ENCODE measurements at regions of chr18 and their contacts with region 1.

Region 1: GRCh38 chr18:58110398-58110797 is 66.4 kb downstream of the NEDD4L start:
- DNase-seq: no peak
- H3K4me3 ChIP-seq: no peak overlapping the region
- H3K27ac ChIP-seq: no peak overlapping the region
- H3K4me1 ChIP-seq: no peaks in the 10 kb centered on the region
- H3K27me3 ChIP-seq: no peaks in the 10 kb centered on the region
- CTCF ChIP-seq: no peak

Region 2: GRCh38 chr18:58091099-58091611 is 19.2 kb before region 1 on chr18:
- CTCF ChIA-PET with region 1: no interaction called
- dilution Hi-C with region 1: no loop called
- in situ Hi-C with region 1: no loop called
- intact Hi-C with region 1: loop called (anchors 2 kb)
- DNase-seq: peak; percentile 77
- H3K4me3 ChIP-seq: no peak overlapping the region
- H3K27ac ChIP-seq: no peak overlapping the region
- H3K4me1 ChIP-seq: peaks cover 40% of the 10 kb centered on the region
- H3K27me3 ChIP-seq: no peaks in the 10 kb centered on the region
- CTCF ChIP-seq: no peak

Region 3: DNA sequence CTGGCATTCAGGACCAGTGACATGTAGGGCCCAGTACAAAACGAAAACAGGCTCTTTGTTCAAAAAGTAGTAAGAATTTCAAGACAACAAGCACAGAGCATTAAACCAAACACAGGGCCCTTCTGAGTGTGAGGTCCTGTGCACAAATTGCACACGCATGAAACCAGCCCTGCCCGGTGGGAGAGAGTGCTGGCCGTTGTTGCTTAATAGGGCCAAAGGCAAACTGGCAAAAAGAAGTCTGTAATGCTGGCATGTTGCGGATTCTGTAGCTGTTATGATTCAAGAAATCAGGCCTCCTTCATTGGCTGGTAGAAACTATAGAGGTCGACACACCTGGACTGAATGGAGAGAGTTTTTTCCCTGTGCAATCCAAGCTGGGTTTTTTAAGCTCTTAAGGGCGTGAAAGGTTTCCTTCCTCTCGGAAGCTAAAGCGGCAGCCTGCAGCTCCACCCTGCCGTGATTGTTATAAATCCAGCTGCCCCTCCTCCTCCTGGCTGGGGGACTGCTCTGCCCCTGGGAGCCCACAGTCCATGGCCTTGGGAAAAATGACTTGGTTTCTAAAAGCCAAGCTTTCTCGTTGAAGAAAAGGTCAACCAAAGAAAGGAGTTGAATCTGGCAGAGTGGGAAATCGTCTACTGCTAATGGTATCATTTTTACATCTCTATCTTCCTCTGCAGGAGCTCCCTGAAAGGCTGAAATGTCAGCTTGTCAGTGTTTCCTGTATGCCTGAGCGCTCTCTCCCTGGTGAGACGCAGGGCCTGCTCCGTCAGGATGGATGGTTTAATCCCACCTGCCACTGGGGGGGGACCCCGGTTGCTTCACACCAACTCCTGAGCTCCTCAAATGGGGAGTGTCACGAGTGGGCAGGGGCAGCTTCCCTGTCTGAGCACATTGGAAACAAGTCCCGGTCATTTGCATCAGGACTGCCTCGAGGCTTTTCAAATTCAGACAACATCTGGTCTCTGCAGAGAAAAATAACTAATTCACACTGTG is 374.9 kb after region 1 on chr18:
- CTCF ChIA-PET with region 1: no interaction called
- dilution Hi-C with region 1: no loop called
- in situ Hi-C with region 1: no loop called
- intact Hi-C with region 1: no loop called
- DNase-seq: no peak
- H3K4me3 ChIP-seq: no peak overlapping the region
- H3K27ac ChIP-seq: no peak overlapping the region
- H3K4me1 ChIP-seq: no peaks in the 10 kb centered on the region
- H3K27me3 ChIP-seq: peaks cover 6% of the 10 kb centered on the region
- CTCF ChIP-seq: no peak

Measured in mammary epithelial cell (primary cell).